Endothelial cell of umbilical vein (primary cell): ENCODE measurements at regions of chr5 and their contacts with region 1.

Region 1: GRCh38 chr5:52948418-52949076 is 40.6 kb upstream of the ITGA2 start:
- DNase-seq: peak; percentile 95
- H3K4me3 ChIP-seq: no peak overlapping the region
- H3K27ac ChIP-seq: peak overlapping the region; percentile 52
- H3K4me1 ChIP-seq: peaks cover 33% of the 10 kb centered on the region
- H3K27me3 ChIP-seq: no peaks in the 10 kb centered on the region
- CTCF ChIP-seq: peak; percentile 58 to 64
- POLR2A ChIP-seq: no peak

Region 2: GRCh38 chr5:52922386-52922785 is 26.2 kb before region 1 on chr5:
- CTCF ChIA-PET with region 1: interaction called, 7 read pairs
- POLR2A ChIA-PET with region 1: no interaction called
- dilution Hi-C with region 1: no loop called
- intact Hi-C with region 1: loop called (anchors 1 kb)
- DNase-seq: peak; percentile 83
- H3K4me3 ChIP-seq: no peak overlapping the region
- H3K27ac ChIP-seq: peak overlapping the region; percentile 57
- H3K4me1 ChIP-seq: peaks cover 10% of the 10 kb centered on the region
- H3K27me3 ChIP-seq: no peaks in the 10 kb centered on the region
- CTCF ChIP-seq: peak in 1 of 2 donors; percentile 14
- POLR2A ChIP-seq: no peak

Region 3: GRCh38 chr5:52983731-52984636 is 35.4 kb after region 1 on chr5:
- CTCF ChIA-PET with region 1: interaction called, 64 read pairs
- POLR2A ChIA-PET with region 1: no interaction called
- dilution Hi-C with region 1: no loop called
- intact Hi-C with region 1: loop called (anchors 1 kb)
- DNase-seq: peak; percentile 79
- H3K4me3 ChIP-seq: no peak overlapping the region
- H3K27ac ChIP-seq: peak overlapping the region; percentile 38
- H3K4me1 ChIP-seq: peaks cover 50% of the 10 kb centered on the region
- H3K27me3 ChIP-seq: no peaks in the 10 kb centered on the region
- CTCF ChIP-seq: no peak
- POLR2A ChIP-seq: no peak

Region 4: GRCh38 chr5:53035868-53036381 is 87.4 kb after region 1 on chr5:
- CTCF ChIA-PET with region 1: interaction called, 46 read pairs
- POLR2A ChIA-PET with region 1: no interaction called
- dilution Hi-C with region 1: no loop called
- intact Hi-C with region 1: loop called (anchors 1 kb)
- DNase-seq: peak; percentile 28
- H3K4me3 ChIP-seq: no peak overlapping the region
- H3K27ac ChIP-seq: no peak overlapping the region
- H3K4me1 ChIP-seq: peaks cover 52% of the 10 kb centered on the region
- H3K27me3 ChIP-seq: no peaks in the 10 kb centered on the region
- CTCF ChIP-seq: peak; percentile 20 to 31
- POLR2A ChIP-seq: no peak

Region 5: GRCh38 chr5:53069626-53070025 is 121.1 kb after region 1 on chr5:
- CTCF ChIA-PET with region 1: interaction called, 50 read pairs
- POLR2A ChIA-PET with region 1: no interaction called
- dilution Hi-C with region 1: no loop called
- intact Hi-C with region 1: loop called (anchors 1 kb)
- DNase-seq: peak; percentile 94
- H3K4me3 ChIP-seq: no peak overlapping the region
- H3K27ac ChIP-seq: peak overlapping the region; percentile 89
- H3K4me1 ChIP-seq: peaks cover 14% of the 10 kb centered on the region
- H3K27me3 ChIP-seq: no peaks in the 10 kb centered on the region
- CTCF ChIP-seq: no peak
- POLR2A ChIP-seq: no peak

Region 6: DNA sequence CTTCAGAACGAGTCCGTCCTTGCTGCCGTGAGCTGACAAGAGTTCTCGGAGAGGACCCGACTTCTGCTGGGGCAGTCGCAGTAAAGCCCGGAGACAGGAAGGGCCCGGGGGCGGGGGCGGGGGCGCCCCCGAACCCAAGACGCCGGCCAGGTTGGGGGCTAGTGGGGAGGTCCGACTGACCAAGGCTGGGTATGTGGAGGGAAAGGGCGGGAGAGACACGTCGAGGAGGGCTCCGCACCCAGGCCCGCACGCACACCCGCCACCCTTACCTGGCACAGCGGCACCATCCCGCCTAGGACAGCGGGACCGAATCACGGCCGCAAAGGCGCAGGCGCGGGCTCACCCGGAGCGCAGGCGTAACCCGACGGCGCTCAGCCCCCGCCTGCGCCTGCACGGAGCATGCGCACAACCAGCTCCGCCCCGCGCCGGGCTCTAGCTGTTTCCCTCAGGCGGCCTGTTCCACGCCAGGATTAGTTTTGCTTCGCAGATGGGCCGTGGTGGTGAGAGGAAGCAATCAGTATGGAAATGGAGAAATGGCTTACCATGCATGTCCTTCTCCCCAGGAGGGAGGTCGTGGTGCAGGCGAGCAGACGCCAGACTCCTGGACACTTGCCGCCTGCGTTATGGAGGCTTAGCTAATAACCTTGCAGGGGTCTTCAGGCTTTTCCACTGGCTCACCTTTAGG is 161.0 kb after region 1 on chr5 and contains the start of gene MOCS2:
- CTCF ChIA-PET with region 1: interaction called, 53 read pairs
- POLR2A ChIA-PET with region 1: interaction called, 3 read pairs
- dilution Hi-C with region 1: no loop called
- intact Hi-C with region 1: no loop called
- DNase-seq: peak; percentile 94
- H3K4me3 ChIP-seq: peak within 1 kb of the TSS; percentile 67 to 88 (median 71)
- H3K27ac ChIP-seq: no peak within 1 kb of the TSS
- H3K4me1 ChIP-seq: peaks cover 16% of the 10 kb centered on the region
- H3K27me3 ChIP-seq: no peaks in the 10 kb centered on the region
- CTCF ChIP-seq: no peak
- POLR2A ChIP-seq: peak; percentile 96
- total RNA-seq, gene MOCS2: 31.1 and 31.5 TPM in 2 replicates

Region 7: GRCh38 chr5:54159893-54160195 is 1211.3 kb after region 1 on chr5:
- CTCF ChIA-PET with region 1: no interaction called
- POLR2A ChIA-PET with region 1: no interaction called
- dilution Hi-C with region 1: no loop called
- intact Hi-C with region 1: no loop called
- DNase-seq: no peak
- H3K4me3 ChIP-seq: no peak overlapping the region
- H3K27ac ChIP-seq: no peak overlapping the region
- H3K4me1 ChIP-seq: no peaks in the 10 kb centered on the region
- H3K27me3 ChIP-seq: no peaks in the 10 kb centered on the region
- CTCF ChIP-seq: no peak
- POLR2A ChIP-seq: no peak